ENCODE measurements at regions of chr12 and their contacts with region 1.

Region 1: GRCh38 chr12:102948941-102949352 is 8.5 kb upstream of the ASCL1 start:
- DNase-seq: peak; percentile 42
- H3K4me3 Mint-ChIP-seq: no peak overlapping the region
- H3K27ac Mint-ChIP-seq: no peak overlapping the region
- H3K4me1 Mint-ChIP-seq: no peaks in the 10 kb centered on the region
- H3K27me3 Mint-ChIP-seq: peaks cover 20% of the 10 kb centered on the region
- CTCF ChIP-seq: peak; percentile 93

Region 2: GRCh38 chr12:102757154-102757881 is 191.6 kb before region 1 on chr12:
- CTCF ChIA-PET with region 1: no interaction called
- POLR2A ChIA-PET with region 1: no interaction called
- intact Hi-C with region 1: no loop called
- DNase-seq: peak; percentile 23
- H3K4me3 Mint-ChIP-seq: no peak overlapping the region
- H3K27ac Mint-ChIP-seq: peak overlapping the region; percentile 33
- H3K4me1 Mint-ChIP-seq: peaks cover 7% of the 10 kb centered on the region
- H3K27me3 Mint-ChIP-seq: no peaks in the 10 kb centered on the region
- CTCF ChIP-seq: no peak

Region 3: GRCh38 chr12:102960766-102961465 is 12.0 kb after region 1 on chr12:
- CTCF ChIA-PET with region 1: interaction called, 10 read pairs
- POLR2A ChIA-PET with region 1: no interaction called
- intact Hi-C with region 1: no loop called
- DNase-seq: no peak
- H3K4me3 Mint-ChIP-seq: no peak overlapping the region
- H3K27ac Mint-ChIP-seq: no peak overlapping the region
- H3K4me1 Mint-ChIP-seq: no peaks in the 10 kb centered on the region
- H3K27me3 Mint-ChIP-seq: peaks cover 14% of the 10 kb centered on the region
- CTCF ChIP-seq: no peak

Region 4: GRCh38 chr12:103503977-103504376 is 555.0 kb after region 1 on chr12:
- CTCF ChIA-PET with region 1: interaction called, 3 read pairs
- POLR2A ChIA-PET with region 1: no interaction called
- intact Hi-C with region 1: loop called (anchors 1 kb)
- DNase-seq: peak; percentile 43
- H3K4me3 Mint-ChIP-seq: no peak overlapping the region
- H3K27ac Mint-ChIP-seq: no peak overlapping the region
- H3K4me1 Mint-ChIP-seq: no peaks in the 10 kb centered on the region
- H3K27me3 Mint-ChIP-seq: no peaks in the 10 kb centered on the region
- CTCF ChIP-seq: no peak

Measured in MCF 10A (cell line).